ENCODE measurements at regions of chr19 and their contacts with region 1.

Region 1: DNA sequence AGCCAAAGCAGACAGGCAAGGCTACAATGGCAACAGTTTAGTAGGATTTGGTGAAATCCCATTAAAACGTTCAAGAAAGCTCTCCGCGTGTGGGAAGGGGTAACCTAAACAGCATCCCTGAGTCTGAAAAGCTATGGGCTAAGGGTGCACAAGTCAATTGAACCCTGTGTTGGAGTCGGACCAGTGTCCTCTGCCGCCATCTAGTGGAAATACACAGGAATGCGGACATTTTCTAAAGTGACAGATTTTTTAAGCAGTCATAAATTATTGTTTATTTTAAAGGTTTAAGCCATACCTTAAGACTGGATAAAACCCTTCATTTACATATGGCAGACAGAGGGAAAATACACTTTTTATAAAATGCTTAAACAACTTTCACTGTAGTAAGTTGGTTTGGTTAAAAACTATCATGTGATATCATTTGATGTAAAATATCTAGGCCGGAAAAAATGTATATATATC is 26.5 kb upstream of the LSM14A start:
- DNase-seq: peak; percentile 39
- H3K4me3 Mint-ChIP-seq: no peak overlapping the region
- H3K27ac Mint-ChIP-seq: no peak overlapping the region
- H3K4me1 Mint-ChIP-seq: no peaks in the 10 kb centered on the region
- H3K27me3 Mint-ChIP-seq: peaks cover 3% of the 10 kb centered on the region

Region 2: DNA sequence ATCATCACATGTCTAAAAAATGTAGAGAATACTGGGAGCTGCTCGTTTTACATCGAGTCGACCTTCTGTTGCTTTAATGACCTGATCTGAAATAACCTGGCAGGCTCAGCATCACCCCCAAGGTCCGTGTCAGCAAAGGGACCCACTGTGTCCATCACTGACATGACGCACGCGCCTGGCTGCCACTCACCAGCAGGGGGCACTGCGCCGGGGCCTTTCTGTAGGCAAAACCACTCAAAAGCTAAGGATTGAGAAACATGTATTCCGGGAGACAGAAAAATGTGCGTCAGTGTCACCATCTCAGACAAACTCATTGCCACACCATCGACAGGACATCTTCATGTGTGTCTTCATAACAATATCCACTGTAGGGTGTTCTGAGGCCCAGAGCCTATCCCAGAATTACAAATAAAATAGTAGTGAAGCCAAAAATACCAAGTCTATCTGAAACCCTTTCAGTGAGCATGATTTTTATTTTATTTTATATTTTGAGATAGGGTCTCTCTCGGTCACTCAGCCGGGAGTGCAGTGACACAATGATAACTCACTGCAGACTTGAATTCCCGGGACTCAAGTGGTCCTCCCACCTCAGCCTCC is 103.7 kb before region 1 on chr19:
- intact Hi-C with region 1: loop called (anchors 2 kb)
- DNase-seq: peak; percentile 51
- H3K4me3 Mint-ChIP-seq: no peak overlapping the region
- H3K27ac Mint-ChIP-seq: no peak overlapping the region
- H3K4me1 Mint-ChIP-seq: no peaks in the 10 kb centered on the region
- H3K27me3 Mint-ChIP-seq: peaks cover 4% of the 10 kb centered on the region

Region 3: GRCh38 chr19:34120846-34121639 is 24.7 kb before region 1 on chr19:
- intact Hi-C with region 1: loop called (anchors 1 kb)
- DNase-seq: peak; percentile 23
- H3K4me3 Mint-ChIP-seq: no peak overlapping the region
- H3K27ac Mint-ChIP-seq: no peak overlapping the region
- H3K4me1 Mint-ChIP-seq: peaks cover 1% of the 10 kb centered on the region
- H3K27me3 Mint-ChIP-seq: peaks cover 9% of the 10 kb centered on the region